ENCODE measurements at regions of chr11 and their contacts with region 1.

Region 1: DNA sequence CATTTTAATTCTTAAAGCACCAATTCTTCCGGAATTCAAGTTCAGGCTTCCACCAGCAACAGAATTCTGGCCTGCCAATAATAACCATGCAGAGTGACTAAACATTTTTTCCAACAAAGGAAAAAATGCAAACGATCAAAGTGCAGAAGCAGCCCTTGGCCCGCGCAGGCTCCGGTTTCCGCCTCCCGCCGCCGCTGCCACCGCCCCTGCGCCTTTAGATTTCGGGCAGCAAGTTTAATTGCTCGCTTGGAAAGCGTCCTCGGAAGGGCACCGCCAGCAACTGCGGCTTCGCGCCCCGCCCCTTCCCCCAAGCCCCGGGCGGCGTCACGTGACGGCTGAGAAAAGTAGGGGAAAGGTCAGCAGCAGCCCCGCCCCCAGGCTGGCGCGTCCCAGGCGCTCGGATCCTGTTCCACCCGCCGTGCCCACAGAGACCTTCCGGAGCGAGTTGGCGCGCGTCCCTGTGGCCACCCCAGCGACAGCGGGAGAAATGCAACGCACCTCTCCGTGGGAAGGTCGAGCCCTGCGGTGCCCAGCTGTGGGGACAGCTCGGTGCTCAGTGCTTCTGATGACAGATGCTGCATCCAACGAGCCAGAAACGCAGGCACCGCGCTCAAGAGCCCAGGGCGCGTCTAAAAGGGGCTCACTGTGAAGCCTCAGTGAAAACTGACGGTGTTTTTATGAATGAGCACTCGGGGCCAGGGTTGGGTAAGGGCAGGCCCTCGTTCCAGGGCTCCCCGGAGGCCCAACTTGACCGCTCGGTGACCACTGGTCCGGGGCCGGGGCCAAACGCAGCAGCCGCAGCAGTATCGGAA is 2.5 kb downstream of the CPT1A start:
- DNase-seq: peak; percentile 92
- H3K4me3 Mint-ChIP-seq: peak overlapping the region; percentile 82
- H3K27ac Mint-ChIP-seq: peak overlapping the region; percentile 84
- H3K4me1 Mint-ChIP-seq: peaks cover 39% of the 10 kb centered on the region
- H3K27me3 Mint-ChIP-seq: no peaks in the 10 kb centered on the region

Region 2: DNA sequence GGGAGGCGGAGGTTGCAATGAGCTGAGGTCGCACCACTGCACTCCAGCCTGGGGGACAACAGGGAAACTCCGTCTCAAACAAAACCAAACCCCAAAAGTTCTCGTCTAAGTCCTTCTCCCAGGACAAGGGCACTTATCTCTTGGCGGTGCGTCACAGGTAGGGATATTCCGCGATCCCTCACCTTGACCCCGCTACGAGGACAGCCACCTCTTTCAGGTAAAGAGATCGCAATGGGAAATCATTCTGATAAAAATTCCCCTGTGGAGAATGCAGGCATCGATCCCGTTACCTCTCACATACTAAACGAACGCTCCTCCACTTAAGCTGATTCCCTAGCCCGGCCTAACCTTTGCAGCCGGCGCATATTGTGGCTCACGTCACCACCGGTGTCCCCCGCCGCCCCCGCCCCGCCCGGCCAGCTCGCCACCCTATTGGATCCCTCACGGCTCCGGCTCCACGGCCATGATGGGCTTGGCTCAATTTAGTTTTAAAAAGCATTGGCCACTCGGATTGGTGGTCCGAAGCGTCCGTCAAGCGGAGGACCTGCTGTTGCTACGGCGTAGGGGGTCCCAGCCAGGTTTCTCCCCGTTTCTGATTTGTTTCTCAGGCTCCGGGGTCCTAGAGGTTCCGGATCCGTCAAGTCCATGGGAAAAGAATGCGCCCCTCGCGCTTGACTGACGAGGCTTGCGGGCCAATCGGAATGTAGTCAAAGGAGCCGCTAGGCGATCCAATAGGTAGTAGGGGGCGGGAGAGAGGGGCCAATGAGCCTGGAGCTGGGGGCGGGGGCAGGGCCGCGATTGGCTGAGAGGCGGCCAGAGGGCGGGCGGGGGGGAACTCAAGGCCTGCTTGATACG is 379.1 kb before region 1 on chr11:
- intact Hi-C with region 1: loop called (anchors 5 kb)
- DNase-seq: peak; percentile 92
- H3K4me3 Mint-ChIP-seq: peak overlapping the region; percentile 88
- H3K27ac Mint-ChIP-seq: peak overlapping the region; percentile 89
- H3K4me1 Mint-ChIP-seq: peaks cover 23% of the 10 kb centered on the region
- H3K27me3 Mint-ChIP-seq: no peaks in the 10 kb centered on the region

Region 3: GRCh38 chr11:68643585-68643984 is 195.7 kb before region 1 on chr11:
- intact Hi-C with region 1: no loop called
- DNase-seq: no peak
- H3K4me3 Mint-ChIP-seq: no peak overlapping the region
- H3K27ac Mint-ChIP-seq: no peak overlapping the region
- H3K4me1 Mint-ChIP-seq: no peaks in the 10 kb centered on the region
- H3K27me3 Mint-ChIP-seq: peaks cover 2% of the 10 kb centered on the region

Region 4: GRCh38 chr11:68751004-68751856 is 88.0 kb before region 1 on chr11 and contains the start of gene TESMIN:
- intact Hi-C with region 1: loop called (anchors 2 kb)
- DNase-seq: peak; percentile 88
- H3K4me3 Mint-ChIP-seq: peak within 1 kb of the TSS; percentile 78
- H3K27ac Mint-ChIP-seq: peak within 1 kb of the TSS; percentile 33
- H3K4me1 Mint-ChIP-seq: peaks cover 9% of the 10 kb centered on the region
- H3K27me3 Mint-ChIP-seq: no peaks in the 10 kb centered on the region
- total RNA-seq, gene TESMIN: 3.8 and 5.5 TPM in 2 replicates

Region 5: GRCh38 chr11:68903288-68904247 is 64.3 kb after region 1 on chr11 and contains the starts of genes IGHMBP2 and MRPL21:
- intact Hi-C with region 1: loop called (anchors 2 kb)
- DNase-seq: peak; percentile 82
- H3K4me3 Mint-ChIP-seq: peak within 1 kb of the TSS; percentile 99
- H3K27ac Mint-ChIP-seq: peak within 1 kb of the TSS; percentile 93
- H3K4me1 Mint-ChIP-seq: peaks cover 31% of the 10 kb centered on the region
- H3K27me3 Mint-ChIP-seq: no peaks in the 10 kb centered on the region
- total RNA-seq, gene IGHMBP2: 31.3 and 31.6 TPM in 2 replicates
- total RNA-seq, gene MRPL21: 104 and 106 TPM in 2 replicates

Region 6: GRCh38 chr11:69048718-69049489 is 209.6 kb after region 1 on chr11 and contains the start of gene TPCN2:
- intact Hi-C with region 1: loop called (anchors 1 kb)
- DNase-seq: peak; percentile 90
- H3K4me3 Mint-ChIP-seq: peak within 1 kb of the TSS; percentile 78
- H3K27ac Mint-ChIP-seq: peak within 1 kb of the TSS; percentile 79
- H3K4me1 Mint-ChIP-seq: peaks cover 14% of the 10 kb centered on the region
- H3K27me3 Mint-ChIP-seq: peaks cover 18% of the 10 kb centered on the region
- total RNA-seq, gene TPCN2: 19.1 and 20.0 TPM in 2 replicates

Region 7: DNA sequence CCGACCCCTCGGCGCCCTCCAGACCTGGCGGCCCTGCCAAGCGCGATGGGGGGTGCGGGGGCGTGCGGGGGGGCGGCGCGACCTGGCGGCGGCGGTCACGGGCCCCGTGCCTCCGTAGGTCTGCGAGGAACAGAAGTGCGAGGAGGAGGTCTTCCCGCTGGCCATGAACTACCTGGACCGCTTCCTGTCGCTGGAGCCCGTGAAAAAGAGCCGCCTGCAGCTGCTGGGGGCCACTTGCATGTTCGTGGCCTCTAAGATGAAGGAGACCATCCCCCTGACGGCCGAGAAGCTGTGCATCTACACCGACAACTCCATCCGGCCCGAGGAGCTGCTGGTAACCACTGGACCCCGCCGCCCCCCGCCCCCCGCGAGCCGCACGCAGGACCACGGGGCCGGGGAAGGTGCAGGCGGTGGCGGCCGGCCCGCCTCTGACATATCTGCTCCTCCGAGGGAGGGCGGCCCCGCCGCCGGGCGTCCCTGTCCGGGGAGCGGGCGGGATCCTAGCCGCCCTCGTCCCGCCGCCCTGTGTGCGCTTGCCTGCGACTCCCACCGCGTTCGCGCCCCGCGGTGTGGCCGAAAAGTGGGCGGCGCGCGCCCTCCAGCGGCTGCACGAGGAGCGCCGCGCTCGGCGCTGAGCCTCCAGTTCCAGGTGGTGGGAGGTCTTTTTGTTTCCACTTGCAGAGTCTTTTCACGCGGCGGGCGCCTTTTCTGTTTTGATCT is 803.8 kb after region 1 on chr11:
- intact Hi-C with region 1: loop called (anchors 5 kb)
- DNase-seq: peak; percentile 64
- H3K4me3 Mint-ChIP-seq: peak overlapping the region; percentile 56
- H3K27ac Mint-ChIP-seq: no peak overlapping the region
- H3K4me1 Mint-ChIP-seq: peaks cover 3% of the 10 kb centered on the region
- H3K27me3 Mint-ChIP-seq: peaks cover 27% of the 10 kb centered on the region

Measured in activated T-helper 2 cell treated with anti-CD3 and anti-CD28 coated beads, Interferon-gamma antibody, Interleukin-2, Interleukin-4, amounts not matched to agents 10 μg/mL and 5 μg/mL and 100 μg/mL, durations not matched to agents 14 hours and 24 hours and 36 hours (primary cell).